ENCODE measurements at regions of chr11 and their contacts with region 1.

Region 1: GRCh38 chr11:77091146-77091940 is 11.3 kb upstream of the OMP start:
- DNase-seq: no peak
- H3K4me3 ChIP-seq: no peak overlapping the region
- H3K27ac ChIP-seq: no peak overlapping the region
- H3K27me3 ChIP-seq: no peaks in the 10 kb centered on the region
- CTCF ChIP-seq: peak; percentile 96

Region 2: GRCh38 chr11:77053217-77054015 is 37.9 kb before region 1 on chr11:
- CTCF ChIA-PET with region 1: interaction called, 156 read pairs
- POLR2A ChIA-PET with region 1: no interaction called
- DNase-seq: no peak
- H3K4me3 ChIP-seq: no peak overlapping the region
- H3K27ac ChIP-seq: no peak overlapping the region
- H3K27me3 ChIP-seq: peaks cover 7% of the 10 kb centered on the region
- CTCF ChIP-seq: no peak

Region 3: GRCh38 chr11:77066229-77067042 is 24.9 kb before region 1 on chr11 and contains the start of gene CAPN5:
- CTCF ChIA-PET with region 1: interaction called, 20 read pairs
- POLR2A ChIA-PET with region 1: interaction called, 10 read pairs
- DNase-seq: peak; percentile 76
- H3K4me3 ChIP-seq: peak within 1 kb of the TSS; percentile 73
- H3K27ac ChIP-seq: peak within 1 kb of the TSS; percentile 87
- H3K27me3 ChIP-seq: no peaks in the 10 kb centered on the region
- CTCF ChIP-seq: peak; percentile 46
- polyA plus RNA-seq, gene CAPN5: 18.6 and 22.8 TPM in 2 replicates

Region 4: GRCh38 chr11:77073328-77074001 is 17.9 kb before region 1 on chr11:
- CTCF ChIA-PET with region 1: interaction called, 16 read pairs
- POLR2A ChIA-PET with region 1: no interaction called
- DNase-seq: peak; percentile 80
- H3K4me3 ChIP-seq: no peak overlapping the region
- H3K27ac ChIP-seq: peak overlapping the region; percentile 99
- H3K27me3 ChIP-seq: no peaks in the 10 kb centered on the region
- CTCF ChIP-seq: peak; percentile 56

Region 5: DNA sequence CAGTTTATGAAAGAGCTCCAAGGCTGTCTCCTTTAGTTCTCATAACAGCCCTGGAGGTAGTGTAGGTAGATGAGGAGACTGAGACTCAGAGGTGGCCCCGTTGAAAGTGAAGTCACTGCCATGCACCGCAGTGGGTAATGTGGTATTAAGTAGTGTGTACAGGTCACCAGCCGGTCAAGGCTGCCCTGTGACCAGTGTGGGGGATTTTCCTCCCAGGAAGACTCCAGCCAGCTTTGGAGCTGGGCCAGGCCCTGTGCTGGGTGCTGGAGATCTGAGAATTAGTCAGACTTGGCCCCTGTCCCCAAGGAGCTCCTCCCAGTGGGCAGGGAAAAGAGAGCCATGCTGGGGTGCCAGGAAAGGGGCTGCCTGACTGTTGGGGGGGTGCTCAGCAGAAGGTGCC is 16.6 kb after region 1 on chr11:
- CTCF ChIA-PET with region 1: interaction called, 23 read pairs
- POLR2A ChIA-PET with region 1: no interaction called
- DNase-seq: peak; percentile 52
- H3K4me3 ChIP-seq: no peak overlapping the region
- H3K27ac ChIP-seq: peak overlapping the region; percentile 25
- H3K27me3 ChIP-seq: no peaks in the 10 kb centered on the region
- CTCF ChIP-seq: no peak

Region 6: GRCh38 chr11:77113382-77114088 is 22.2 kb after region 1 on chr11:
- CTCF ChIA-PET with region 1: interaction called, 23 read pairs
- POLR2A ChIA-PET with region 1: no interaction called
- DNase-seq: no peak
- H3K4me3 ChIP-seq: no peak overlapping the region
- H3K27ac ChIP-seq: no peak overlapping the region
- H3K27me3 ChIP-seq: no peaks in the 10 kb centered on the region
- CTCF ChIP-seq: peak; percentile 74